ENCODE measurements at regions of chr17 and their contacts with region 1.

Region 1: DNA sequence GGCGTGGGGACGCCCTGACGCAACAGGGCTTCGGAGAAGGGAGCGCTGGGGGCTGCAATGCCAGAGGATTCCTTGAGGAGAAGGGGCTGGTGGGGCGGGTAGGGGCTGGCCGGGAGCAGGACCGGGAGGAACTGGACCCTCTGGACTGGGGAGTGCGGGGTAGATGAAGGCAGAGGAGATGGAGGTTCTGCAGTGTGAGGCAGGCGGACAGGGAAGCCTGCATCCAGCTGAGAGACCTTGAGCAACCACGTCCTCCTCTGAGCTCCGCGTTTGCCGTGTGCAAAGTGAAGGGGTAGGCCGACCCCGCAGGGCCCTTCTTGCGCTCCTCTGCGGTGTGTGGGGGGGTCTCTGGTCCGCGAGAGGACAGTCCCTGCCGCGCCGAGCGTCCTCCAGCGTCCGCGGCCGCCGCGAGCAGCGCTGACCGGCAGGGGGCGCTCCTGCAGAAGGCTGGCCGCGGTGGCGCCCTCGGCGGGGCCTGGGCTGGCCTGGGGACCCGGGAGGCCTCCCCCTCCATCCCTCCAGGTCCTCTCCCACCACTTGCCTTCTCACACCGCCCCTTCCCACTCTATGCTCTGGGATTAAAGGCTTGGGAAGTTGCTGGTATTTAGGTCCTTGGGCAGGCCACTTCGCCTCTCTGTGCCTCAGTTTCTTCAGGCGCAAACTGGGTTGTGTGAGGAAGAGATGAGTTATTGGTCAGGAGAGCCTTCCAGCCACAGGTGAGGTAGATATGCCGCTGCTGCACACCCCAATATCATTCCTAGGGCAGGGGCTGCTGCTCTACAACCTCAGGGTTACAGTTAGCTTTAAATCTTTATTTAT is 9.6 kb upstream of the WNT9B start:
- DNase-seq: peak in 1 of 2 donors; percentile 21
- ATAC-seq: peak; percentile 60

Region 2: GRCh38 chr17:46984892-46985291 is 143.1 kb after region 1 on chr17:
- intact Hi-C with region 1: loop called in 1 of 2 experiments (anchors 10 kb)
- DNase-seq: peak; percentile 61 to 65
- ATAC-seq: peak; percentile 93